Heart right ventricle (tissue), 16 donors: ENCODE measurements at regions of chr6 and their contacts with region 1.

Region 1: GRCh38 chr6:65399355-65400084 is 307.5 kb downstream of the EYS start:
- DNase-seq: no peak
- ATAC-seq: no peak
- H3K4me3 ChIP-seq: no peak overlapping the region
- H3K27ac ChIP-seq: no peak overlapping the region
- H3K4me1 ChIP-seq: no peaks in the 10 kb centered on the region
- H3K27me3 ChIP-seq: no peaks in the 10 kb centered on the region
- CTCF ChIP-seq: no peak

Region 2: DNA sequence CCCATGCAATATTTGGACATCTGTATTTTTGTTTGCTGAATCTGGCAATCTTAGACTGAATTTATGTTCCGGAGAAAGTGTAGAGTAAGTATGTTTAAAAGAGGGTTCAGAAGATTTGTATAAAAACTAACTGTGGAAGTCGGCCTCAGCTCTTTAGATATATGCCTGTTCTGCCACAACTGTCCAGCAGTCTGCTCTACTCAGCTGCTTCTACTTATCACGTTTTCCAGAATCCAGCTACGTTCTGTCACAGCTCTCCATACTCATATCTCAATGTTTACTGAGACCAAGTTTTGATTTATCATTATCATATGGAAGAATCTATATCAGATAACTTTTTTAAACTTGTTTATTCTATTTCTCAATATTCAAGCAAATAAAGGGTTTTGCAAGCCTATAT is 413.8 kb before region 1 on chr6:
- intact Hi-C with region 1: no loop called
- DNase-seq: no peak
- ATAC-seq: no peak
- H3K4me3 ChIP-seq: no peak overlapping the region
- H3K27ac ChIP-seq: no peak overlapping the region
- H3K4me1 ChIP-seq: no peaks in the 10 kb centered on the region
- H3K27me3 ChIP-seq: peaks cover 0 to 4% (median 0%) of the 10 kb centered on the region in 7 donors
- CTCF ChIP-seq: no peak

Region 3: GRCh38 chr6:65955034-65955433 is 555.5 kb after region 1 on chr6:
- intact Hi-C with region 1: loop called in 1 of 10 experiments (anchors 5 kb)
- DNase-seq: no peak
- ATAC-seq: no peak
- H3K4me3 ChIP-seq: no peak overlapping the region
- H3K27ac ChIP-seq: no peak overlapping the region
- H3K4me1 ChIP-seq: no peaks in the 10 kb centered on the region
- H3K27me3 ChIP-seq: no peaks in the 10 kb centered on the region
- CTCF ChIP-seq: no peak